ENCODE measurements at regions of chr4 and their contacts with region 1.

Region 1: GRCh38 chr4:89898304-89898716 is 3.7 kb downstream of the MMRN1 start:
- DNase-seq: no peak
- ATAC-seq: no peak
- H3K4me3 ChIP-seq: no peak overlapping the region
- H3K27ac ChIP-seq: no peak overlapping the region
- H3K4me1 ChIP-seq: no peaks in the 10 kb centered on the region
- H3K27me3 ChIP-seq: no peaks in the 10 kb centered on the region
- CTCF ChIP-seq: no peak
- EP300 ChIP-seq: no peak
- POLR2A ChIP-seq: no peak
- RAD21 ChIP-seq: no peak

Region 2: GRCh38 chr4:89226665-89227574 is 671.4 kb before region 1 on chr4:
- CTCF ChIA-PET with region 1: interaction called, 3 read pairs
- POLR2A ChIA-PET with region 1: no interaction called
- in situ Hi-C with region 1: loop called (anchors 25 kb)
- intact Hi-C with region 1: loop called (anchors 2 kb)
- DNase-seq: peak; percentile 62
- ATAC-seq: peak; percentile 100
- H3K4me3 ChIP-seq: no peak overlapping the region
- H3K27ac ChIP-seq: no peak overlapping the region
- H3K4me1 ChIP-seq: peaks cover 15% of the 10 kb centered on the region; the same call in 1 of the 2 replicates
- H3K27me3 ChIP-seq: no peaks in the 10 kb centered on the region
- CTCF ChIP-seq: peak; percentile 86
- EP300 ChIP-seq: no peak
- POLR2A ChIP-seq: no peak
- RAD21 ChIP-seq: peak; percentile 65

Region 3: GRCh38 chr4:89482248-89482647 is 416.1 kb before region 1 on chr4:
- CTCF ChIA-PET with region 1: no interaction called
- POLR2A ChIA-PET with region 1: no interaction called
- in situ Hi-C with region 1: no loop called
- intact Hi-C with region 1: loop called (anchors 1 kb)
- DNase-seq: peak; percentile 35
- ATAC-seq: peak; percentile 93
- H3K4me3 ChIP-seq: no peak overlapping the region
- H3K27ac ChIP-seq: no peak overlapping the region
- H3K4me1 ChIP-seq: no peaks in the 10 kb centered on the region
- H3K27me3 ChIP-seq: no peaks in the 10 kb centered on the region
- CTCF ChIP-seq: peak; percentile 57
- EP300 ChIP-seq: no peak
- POLR2A ChIP-seq: no peak
- RAD21 ChIP-seq: no peak

Region 4: DNA sequence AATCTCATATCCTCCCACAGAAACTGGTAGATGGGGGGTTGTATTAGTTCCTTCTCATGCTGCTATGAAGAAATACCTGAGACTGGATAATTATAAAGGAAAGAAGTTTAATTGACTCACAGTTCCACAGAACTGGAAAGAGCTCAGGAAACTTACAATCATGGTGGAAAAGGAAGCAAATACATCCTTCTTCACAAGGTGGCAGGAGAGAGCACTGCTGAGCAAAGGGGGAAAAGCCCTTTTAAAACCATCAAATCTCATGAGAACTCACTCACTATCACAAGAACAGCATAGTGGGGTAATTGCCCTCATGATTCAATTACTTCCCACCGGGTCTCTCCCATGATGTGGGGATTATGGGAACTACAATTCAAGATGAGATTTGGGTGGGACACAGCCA is 340.2 kb before region 1 on chr4:
- CTCF ChIA-PET with region 1: no interaction called
- POLR2A ChIA-PET with region 1: no interaction called
- in situ Hi-C with region 1: no loop called
- intact Hi-C with region 1: loop called (anchors 1 kb)
- DNase-seq: no peak
- ATAC-seq: no peak
- H3K4me3 ChIP-seq: no peak overlapping the region
- H3K27ac ChIP-seq: no peak overlapping the region
- H3K4me1 ChIP-seq: no peaks in the 10 kb centered on the region
- H3K27me3 ChIP-seq: no peaks in the 10 kb centered on the region; a peak in 1 of 5 replicates
- CTCF ChIP-seq: peak; percentile 30; the same call in 1 of the 2 replicates
- EP300 ChIP-seq: no peak
- POLR2A ChIP-seq: no peak
- RAD21 ChIP-seq: no peak

Region 5: GRCh38 chr4:89598602-89599001 is 299.7 kb before region 1 on chr4:
- CTCF ChIA-PET with region 1: no interaction called
- POLR2A ChIA-PET with region 1: no interaction called
- in situ Hi-C with region 1: loop called (anchors 10 kb)
- intact Hi-C with region 1: loop called (anchors 1 kb)
- DNase-seq: peak; percentile 15
- ATAC-seq: peak; percentile 69
- H3K4me3 ChIP-seq: no peak overlapping the region
- H3K27ac ChIP-seq: no peak overlapping the region
- H3K4me1 ChIP-seq: no peaks in the 10 kb centered on the region
- H3K27me3 ChIP-seq: no peaks in the 10 kb centered on the region
- CTCF ChIP-seq: peak; percentile 42
- EP300 ChIP-seq: no peak
- POLR2A ChIP-seq: no peak
- RAD21 ChIP-seq: no peak

Region 6: GRCh38 chr4:89640620-89641366 is 257.5 kb before region 1 on chr4:
- CTCF ChIA-PET with region 1: interaction called, 10 read pairs
- POLR2A ChIA-PET with region 1: no interaction called
- in situ Hi-C with region 1: no loop called
- intact Hi-C with region 1: loop called (anchors 5 kb)
- DNase-seq: peak; percentile 80
- ATAC-seq: peak; percentile 99
- H3K4me3 ChIP-seq: peak overlapping the region; percentile 51 to 68 (median 59)
- H3K27ac ChIP-seq: peak overlapping the region; percentile 27
- H3K4me1 ChIP-seq: peaks cover 11% of the 10 kb centered on the region
- H3K27me3 ChIP-seq: no peaks in the 10 kb centered on the region
- CTCF ChIP-seq: peak; percentile 90
- EP300 ChIP-seq: no peak
- POLR2A ChIP-seq: no peak
- RAD21 ChIP-seq: peak; percentile 71

Region 7: DNA sequence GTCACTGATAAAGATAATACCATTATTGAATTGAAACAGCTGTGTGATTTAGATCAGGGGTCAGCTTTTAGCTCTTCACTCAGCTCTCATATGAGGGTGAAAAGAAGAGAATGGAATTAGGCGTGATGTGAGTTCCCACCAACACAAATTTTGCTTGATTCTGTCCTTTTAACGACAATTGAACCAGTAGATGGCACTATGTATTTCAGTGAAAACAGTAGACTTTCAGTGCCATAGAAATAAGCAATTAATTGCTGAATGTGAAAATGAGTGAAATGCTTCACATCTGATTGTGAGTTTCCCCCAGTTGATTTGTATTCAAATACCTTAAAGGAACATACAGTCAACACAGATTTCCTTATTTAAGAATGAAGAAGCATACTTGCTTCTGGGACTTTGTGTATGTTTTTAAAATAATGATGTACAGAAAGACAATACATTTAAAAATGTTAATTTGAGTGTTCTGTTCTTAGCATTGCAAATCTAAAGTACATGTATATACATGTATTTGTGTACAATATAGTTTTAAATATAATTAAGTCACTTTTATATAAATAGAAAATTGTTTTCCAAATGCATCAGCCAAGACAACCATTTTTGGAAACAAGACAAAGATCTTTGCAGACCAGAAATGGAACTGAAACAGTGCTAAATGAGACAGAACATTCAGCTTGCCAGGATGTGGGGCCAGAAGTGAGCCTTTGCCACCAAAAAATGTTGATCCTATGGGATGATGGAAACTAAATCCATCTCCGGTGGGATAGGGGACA is 240.2 kb before region 1 on chr4:
- CTCF ChIA-PET with region 1: interaction called, 11 read pairs
- POLR2A ChIA-PET with region 1: no interaction called
- in situ Hi-C with region 1: loop called (anchors 10 kb)
- intact Hi-C with region 1: loop called (anchors 5 kb)
- DNase-seq: peak; percentile 28
- ATAC-seq: no peak; the same call in 2 of the 3 replicates
- H3K4me3 ChIP-seq: no peak overlapping the region
- H3K27ac ChIP-seq: no peak overlapping the region
- H3K4me1 ChIP-seq: 0 out of 2 replicates have a peak, but pooled peaks cover 4% of the 10 kb centered on the region
- H3K27me3 ChIP-seq: peaks cover 0 to 5% of the 10 kb centered on the region in 2 experiments; a peak in 1 of 5 replicates
- CTCF ChIP-seq: peak; percentile 64
- EP300 ChIP-seq: no peak
- POLR2A ChIP-seq: no peak
- RAD21 ChIP-seq: no peak

Measured in HepG2 (cell line).